ENCODE measurements at regions of chr12 and their contacts with region 1.

Region 1: DNA sequence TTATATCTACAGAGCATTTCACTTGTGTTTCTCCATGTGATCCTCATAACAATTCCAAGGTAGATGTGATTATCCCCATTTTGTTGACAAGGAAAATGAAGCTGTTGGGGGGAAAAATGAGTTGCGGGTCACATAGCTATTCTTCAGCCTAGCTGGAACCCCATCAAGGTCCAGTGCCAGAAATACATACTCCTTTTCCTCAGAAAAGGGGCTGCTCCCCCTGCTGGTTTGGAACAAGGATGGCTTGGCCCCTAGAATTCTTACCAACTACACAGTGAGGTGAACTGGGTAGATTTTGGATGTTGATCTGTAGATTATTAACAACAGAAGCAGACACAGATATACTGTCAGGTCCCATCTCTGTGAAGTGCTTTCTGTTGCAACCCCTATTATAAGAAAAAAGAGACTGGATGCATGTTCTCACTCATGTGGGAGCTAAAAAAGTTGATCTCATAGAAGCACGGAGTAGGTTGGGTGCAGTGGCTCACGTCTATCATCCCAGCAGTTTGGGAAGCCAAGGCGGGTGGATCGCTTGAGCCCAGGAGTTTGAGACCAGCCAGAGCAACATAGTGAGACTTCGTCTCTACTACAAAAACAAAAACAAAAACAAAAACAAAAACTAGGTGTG is 8.9 kb downstream of the IKZF4 start:
- DNase-seq: peak; percentile 51
- ATAC-seq: peak; percentile 34
- H3K4me3 Mint-ChIP-seq: no peak overlapping the region
- H3K27ac Mint-ChIP-seq: peak overlapping the region; percentile 80
- H3K4me1 Mint-ChIP-seq: peaks cover 47% of the 10 kb centered on the region
- H3K27me3 Mint-ChIP-seq: no peaks in the 10 kb centered on the region
- CTCF ChIP-seq: peak; percentile 69

Region 2: GRCh38 chr12:55973598-55974307 is 56.0 kb before region 1 on chr12 and contains the start of gene RAB5B:
- CTCF ChIA-PET with region 1: interaction called, 10 read pairs
- POLR2A ChIA-PET with region 1: interaction called, 4 read pairs
- intact Hi-C with region 1: no loop called
- DNase-seq: peak; percentile 99
- ATAC-seq: peak; percentile 93
- H3K4me3 Mint-ChIP-seq: no peak within 1 kb of the TSS
- H3K27ac Mint-ChIP-seq: no peak within 1 kb of the TSS
- H3K4me1 Mint-ChIP-seq: peaks cover 24% of the 10 kb centered on the region
- H3K27me3 Mint-ChIP-seq: no peaks in the 10 kb centered on the region
- CTCF ChIP-seq: no peak
- total RNA-seq, gene RAB5B: 26.0 to 32.4 TPM

Region 3: GRCh38 chr12:55982319-55982936 is 47.4 kb before region 1 on chr12:
- CTCF ChIA-PET with region 1: interaction called, 10 read pairs
- POLR2A ChIA-PET with region 1: no interaction called
- intact Hi-C with region 1: no loop called
- DNase-seq: no peak
- ATAC-seq: no peak
- H3K4me3 Mint-ChIP-seq: no peak overlapping the region
- H3K27ac Mint-ChIP-seq: peak overlapping the region; percentile 30
- H3K4me1 Mint-ChIP-seq: peaks cover 10% of the 10 kb centered on the region
- H3K27me3 Mint-ChIP-seq: no peaks in the 10 kb centered on the region
- CTCF ChIP-seq: no peak

Region 4: GRCh38 chr12:56007564-56008559 is 21.9 kb before region 1 on chr12:
- CTCF ChIA-PET with region 1: interaction called, 14 read pairs
- POLR2A ChIA-PET with region 1: no interaction called
- intact Hi-C with region 1: no loop called
- DNase-seq: peak; percentile 68
- ATAC-seq: peak; percentile 84
- H3K4me3 Mint-ChIP-seq: peak overlapping the region; percentile 85
- H3K27ac Mint-ChIP-seq: peak overlapping the region; percentile 89
- H3K4me1 Mint-ChIP-seq: peaks cover 41% of the 10 kb centered on the region
- H3K27me3 Mint-ChIP-seq: no peaks in the 10 kb centered on the region
- CTCF ChIP-seq: no peak

Region 5: DNA sequence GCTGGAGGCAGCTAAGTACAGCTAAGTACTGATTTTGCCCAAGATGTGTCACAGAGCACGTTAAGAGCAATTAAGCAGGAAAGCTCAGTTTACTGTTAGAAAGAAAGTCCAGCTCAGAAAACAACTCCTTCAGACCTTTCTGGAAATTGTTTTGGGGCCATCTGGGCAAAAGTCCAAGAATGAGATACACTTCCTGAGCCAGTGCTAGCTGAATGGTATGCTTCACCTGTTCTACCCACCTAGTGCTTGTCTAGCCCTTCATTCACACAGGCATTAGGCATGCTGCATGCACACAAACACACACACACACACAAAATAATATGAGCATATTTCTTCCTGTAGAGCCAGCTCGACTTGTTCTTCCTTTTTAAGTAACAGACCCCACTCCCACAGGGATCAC is 15.6 kb before region 1 on chr12:
- CTCF ChIA-PET with region 1: interaction called, 28 read pairs
- POLR2A ChIA-PET with region 1: interaction called, 3 read pairs
- intact Hi-C with region 1: no loop called
- DNase-seq: no peak
- ATAC-seq: no peak
- H3K4me3 Mint-ChIP-seq: no peak overlapping the region
- H3K27ac Mint-ChIP-seq: no peak overlapping the region
- H3K4me1 Mint-ChIP-seq: peaks cover 36% of the 10 kb centered on the region
- H3K27me3 Mint-ChIP-seq: no peaks in the 10 kb centered on the region
- CTCF ChIP-seq: no peak

Region 6: DNA sequence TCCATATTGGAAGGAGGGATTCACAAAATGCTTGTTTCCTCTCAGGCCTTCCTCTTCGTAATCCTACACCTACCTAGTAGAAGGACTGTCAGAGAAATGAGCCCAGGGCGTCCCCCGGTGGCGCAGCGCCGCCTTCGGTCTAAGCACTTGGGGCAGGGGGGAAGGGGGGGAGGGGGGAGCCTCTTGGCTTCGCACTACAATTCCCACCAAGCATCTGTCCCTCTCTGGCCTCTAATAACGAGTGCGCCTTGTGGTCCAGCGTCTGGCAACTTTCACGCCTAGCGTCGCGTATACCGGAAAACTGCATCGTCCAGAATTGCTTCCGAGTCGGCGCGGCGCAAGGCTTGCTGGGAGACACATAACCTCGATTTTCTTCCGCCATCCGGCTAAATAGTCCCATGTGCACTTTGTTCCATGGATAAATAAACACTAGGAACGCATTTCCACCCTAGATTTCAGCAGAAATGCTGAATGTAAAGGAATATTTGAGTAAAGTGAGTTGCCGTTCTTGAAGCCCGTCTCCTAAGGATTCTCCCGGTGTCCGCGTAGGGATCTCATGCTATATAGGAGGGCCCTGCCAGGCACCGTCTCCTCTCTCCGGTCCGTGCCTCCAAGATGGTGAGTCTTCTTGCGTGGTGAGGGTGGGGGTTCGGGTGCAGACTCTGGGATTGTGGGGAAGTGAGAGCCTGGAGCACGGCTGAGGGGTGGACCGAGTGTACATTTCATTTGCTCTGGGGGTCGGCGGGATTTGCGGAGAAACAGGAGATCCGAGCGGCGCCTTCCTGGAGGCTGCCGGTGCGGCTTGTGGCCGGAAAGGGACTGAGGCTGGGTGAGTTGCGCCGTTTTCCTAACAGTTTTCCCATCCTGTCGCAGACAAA is 12.0 kb after region 1 on chr12 and contains the start of gene RPS26:
- CTCF ChIA-PET with region 1: interaction called, 17 read pairs
- POLR2A ChIA-PET with region 1: interaction called, 5 read pairs
- intact Hi-C with region 1: no loop called
- DNase-seq: peak; percentile 97
- ATAC-seq: peak; percentile 90
- H3K4me3 Mint-ChIP-seq: peak within 1 kb of the TSS; percentile 84
- H3K27ac Mint-ChIP-seq: peak within 1 kb of the TSS; percentile 92
- H3K4me1 Mint-ChIP-seq: peaks cover 52% of the 10 kb centered on the region
- H3K27me3 Mint-ChIP-seq: no peaks in the 10 kb centered on the region
- CTCF ChIP-seq: peak; percentile 57
- total RNA-seq, gene RPS26: 29.7 to 29.8 TPM

Region 7: DNA sequence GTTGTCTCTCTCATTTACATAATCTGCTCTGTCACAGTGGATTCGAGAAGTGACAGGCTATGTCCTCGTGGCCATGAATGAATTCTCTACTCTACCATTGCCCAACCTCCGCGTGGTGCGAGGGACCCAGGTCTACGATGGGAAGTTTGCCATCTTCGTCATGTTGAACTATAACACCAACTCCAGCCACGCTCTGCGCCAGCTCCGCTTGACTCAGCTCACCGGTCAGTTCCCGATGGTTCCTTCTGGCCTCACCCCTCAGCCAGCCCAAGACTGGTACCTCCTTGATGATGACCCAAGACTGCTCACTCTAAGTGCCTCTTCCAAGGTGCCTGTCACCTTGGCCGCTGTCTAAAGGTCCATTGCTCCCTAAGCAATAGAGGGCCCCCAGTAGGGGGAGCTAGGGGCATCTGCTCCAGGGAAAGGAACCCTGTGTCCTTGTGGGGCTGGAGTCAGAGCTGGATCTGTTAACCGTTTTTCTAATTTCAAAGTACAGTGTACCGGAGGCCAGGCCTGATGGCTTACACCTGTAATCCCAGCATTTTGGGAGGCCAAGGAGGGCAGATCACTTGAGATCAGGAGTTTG is 55.3 kb after region 1 on chr12:
- CTCF ChIA-PET with region 1: no interaction called
- POLR2A ChIA-PET with region 1: no interaction called
- intact Hi-C with region 1: no loop called
- DNase-seq: peak; percentile 63
- ATAC-seq: peak; percentile 71
- H3K4me3 Mint-ChIP-seq: no peak overlapping the region
- H3K27ac Mint-ChIP-seq: no peak overlapping the region
- H3K4me1 Mint-ChIP-seq: peaks cover 9% of the 10 kb centered on the region
- H3K27me3 Mint-ChIP-seq: peaks cover 8% of the 10 kb centered on the region
- CTCF ChIP-seq: peak; percentile 65

Region 8: DNA sequence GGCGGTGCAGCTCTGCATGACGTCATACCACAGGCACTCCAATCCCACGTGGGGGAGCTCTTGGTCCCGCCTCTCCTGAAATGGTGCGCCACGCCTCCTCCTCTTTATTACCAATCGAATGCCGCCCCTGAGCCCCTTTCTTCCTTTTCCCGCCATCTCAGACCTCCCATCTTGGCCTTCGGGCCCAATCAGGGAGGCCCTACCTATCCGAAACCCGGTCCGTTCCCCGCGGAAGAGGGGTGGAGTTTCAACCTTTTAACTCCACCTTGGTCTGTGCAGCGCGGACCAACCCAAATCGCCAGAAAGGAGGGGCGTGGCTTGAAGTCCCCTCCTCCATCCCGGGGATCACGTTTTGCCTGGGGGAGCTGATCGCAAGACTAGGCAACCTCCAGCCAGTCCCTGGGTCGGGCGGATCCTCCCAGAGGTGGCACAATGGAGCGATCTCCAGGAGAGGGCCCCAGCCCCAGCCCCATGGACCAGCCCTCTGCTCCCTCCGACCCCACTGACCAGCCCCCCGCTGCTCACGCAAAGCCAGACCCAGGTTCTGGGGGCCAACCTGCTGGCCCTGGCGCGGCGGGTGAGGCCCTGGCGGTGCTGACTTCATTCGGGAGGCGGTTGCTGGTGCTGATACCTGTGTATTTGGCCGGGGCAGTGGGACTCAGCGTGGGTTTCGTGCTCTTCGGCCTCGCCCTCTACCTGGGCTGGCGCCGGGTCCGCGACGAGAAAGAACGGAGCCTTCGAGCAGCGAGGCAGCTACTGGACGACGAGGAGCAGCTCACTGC is 98.3 kb after region 1 on chr12 and contains the start of gene ESYT1:
- CTCF ChIA-PET with region 1: no interaction called
- POLR2A ChIA-PET with region 1: no interaction called
- intact Hi-C with region 1: no loop called
- DNase-seq: peak; percentile 99
- ATAC-seq: peak; percentile 92
- H3K4me3 Mint-ChIP-seq: peak within 1 kb of the TSS; percentile 84
- H3K27ac Mint-ChIP-seq: peak within 1 kb of the TSS; percentile 93
- H3K4me1 Mint-ChIP-seq: peaks cover 53% of the 10 kb centered on the region
- H3K27me3 Mint-ChIP-seq: no peaks in the 10 kb centered on the region
- CTCF ChIP-seq: no peak
- total RNA-seq, gene ESYT1: 154 to 160 TPM

Region 9: GRCh38 chr12:56448860-56449621 is 419.3 kb after region 1 on chr12 and contains the start of gene TIMELESS:
- CTCF ChIA-PET with region 1: no interaction called
- POLR2A ChIA-PET with region 1: no interaction called
- intact Hi-C with region 1: no loop called
- DNase-seq: peak; percentile 86
- ATAC-seq: peak; percentile 97
- H3K4me3 Mint-ChIP-seq: peak within 1 kb of the TSS; percentile 88
- H3K27ac Mint-ChIP-seq: peak within 1 kb of the TSS; percentile 93
- H3K4me1 Mint-ChIP-seq: peaks cover 24% of the 10 kb centered on the region
- H3K27me3 Mint-ChIP-seq: no peaks in the 10 kb centered on the region
- CTCF ChIP-seq: no peak
- total RNA-seq, gene TIMELESS: 48.7 to 49.2 TPM